AG04450 (cell line): ENCODE measurements at regions of chr11 and their contacts with region 1.

Region 1: DNA sequence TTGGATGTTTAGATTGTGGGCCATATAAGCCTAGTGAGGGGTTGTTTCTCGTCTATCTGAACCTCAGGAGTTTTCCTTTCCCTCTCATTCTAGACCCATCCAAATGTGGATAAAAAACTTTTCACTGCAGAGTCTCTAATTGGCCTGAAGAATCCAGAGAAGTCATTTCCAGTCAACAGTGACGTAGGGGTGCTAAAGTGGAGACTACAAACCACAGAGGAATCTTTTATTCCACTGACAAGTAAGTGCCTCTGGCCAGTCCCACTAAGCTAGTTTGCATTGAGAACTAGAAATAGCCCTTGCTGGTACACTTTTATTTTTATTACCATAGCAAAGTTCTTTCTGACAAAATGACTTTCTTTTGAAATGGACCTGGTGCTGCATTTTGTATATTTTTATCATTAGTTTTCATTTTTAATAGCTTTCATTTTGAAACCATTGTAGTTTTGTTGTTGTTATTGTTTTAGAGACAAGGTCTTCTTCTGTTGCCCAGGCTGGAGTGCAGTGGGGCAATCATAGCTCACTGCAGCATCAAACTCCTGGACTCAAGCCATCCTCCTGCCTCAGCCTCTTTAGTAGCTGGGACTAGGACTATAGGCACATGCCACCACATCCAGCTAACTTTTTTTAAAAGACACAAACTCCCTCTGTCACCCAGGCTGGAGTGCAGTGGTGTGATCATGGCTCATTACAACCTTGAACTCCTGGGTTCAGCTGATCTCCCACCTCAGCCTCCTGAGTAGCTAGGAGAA is 14.6 kb upstream of the PHLDB1 start:
- DNase-seq: no peak
- H3K4me3 ChIP-seq: no peak overlapping the region
- H3K27ac ChIP-seq: no peak overlapping the region
- H3K27me3 ChIP-seq: no peaks in the 10 kb centered on the region
- CTCF ChIP-seq: no peak

Region 2: GRCh38 chr11:118605116-118605867 is 12.5 kb after region 1 on chr11:
- CTCF ChIA-PET with region 1: interaction called, 40 read pairs
- POLR2A ChIA-PET with region 1: interaction called, 11 read pairs
- DNase-seq: peak; percentile 85
- H3K4me3 ChIP-seq: peak overlapping the region; percentile 27
- H3K27ac ChIP-seq: peak overlapping the region; percentile 82
- H3K27me3 ChIP-seq: no peaks in the 10 kb centered on the region
- CTCF ChIP-seq: no peak

Region 3: GRCh38 chr11:118610804-118611795 is 18.3 kb after region 1 on chr11:
- CTCF ChIA-PET with region 1: interaction called, 40 read pairs
- POLR2A ChIA-PET with region 1: no interaction called
- DNase-seq: no peak
- H3K4me3 ChIP-seq: peak overlapping the region; percentile 83
- H3K27ac ChIP-seq: no peak overlapping the region
- H3K27me3 ChIP-seq: no peaks in the 10 kb centered on the region
- CTCF ChIP-seq: peak; percentile 77

Region 4: GRCh38 chr11:118634431-118635236 is 41.8 kb after region 1 on chr11:
- CTCF ChIA-PET with region 1: interaction called, 11 read pairs
- POLR2A ChIA-PET with region 1: no interaction called
- DNase-seq: no peak
- H3K4me3 ChIP-seq: no peak overlapping the region
- H3K27ac ChIP-seq: peak overlapping the region; percentile 21
- H3K27me3 ChIP-seq: no peaks in the 10 kb centered on the region
- CTCF ChIP-seq: no peak

Region 5: GRCh38 chr11:118659314-118659952 is 66.6 kb after region 1 on chr11:
- CTCF ChIA-PET with region 1: interaction called, 15 read pairs
- POLR2A ChIA-PET with region 1: no interaction called
- DNase-seq: peak; percentile 42
- H3K4me3 ChIP-seq: no peak overlapping the region
- H3K27ac ChIP-seq: peak overlapping the region; percentile 47
- H3K27me3 ChIP-seq: no peaks in the 10 kb centered on the region
- CTCF ChIP-seq: peak; percentile 90

Region 6: DNA sequence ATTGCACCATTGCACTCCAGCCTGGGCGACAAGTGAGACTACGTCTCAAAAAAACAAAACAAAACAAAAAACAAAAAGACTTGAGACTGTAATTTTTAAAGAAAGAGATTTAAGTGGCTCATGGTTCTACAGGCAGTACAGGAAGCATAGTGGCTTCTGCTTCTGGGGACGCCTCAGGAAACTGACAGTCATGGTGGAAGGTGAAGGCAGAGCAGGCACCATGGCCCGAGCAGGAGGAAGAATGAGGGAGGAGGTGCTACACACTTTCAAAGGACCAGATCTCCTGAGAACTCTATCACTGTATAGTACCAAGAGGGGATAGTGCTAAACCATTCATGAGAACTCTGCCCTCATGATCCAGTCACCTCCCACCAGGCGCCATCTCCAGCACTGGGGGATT is 665.4 kb after region 1 on chr11:
- CTCF ChIA-PET with region 1: no interaction called
- POLR2A ChIA-PET with region 1: no interaction called
- DNase-seq: no peak
- H3K4me3 ChIP-seq: no peak overlapping the region
- H3K27ac ChIP-seq: no peak overlapping the region
- H3K27me3 ChIP-seq: no peaks in the 10 kb centered on the region
- CTCF ChIP-seq: no peak